CD14-positive monocyte (primary cell): ENCODE measurements at regions of chr22 and their contacts with region 1.

Region 1: GRCh38 chr22:37643225-37643847 is 3.9 kb downstream of the SH3BP1 start:
- DNase-seq: peak; percentile 59 to 79 (median 73)
- H3K4me3 ChIP-seq: no peak overlapping the region
- H3K4me3 Mint-ChIP-seq: peak overlapping the region in 1 of 2 donors; percentile 53
- H3K27ac ChIP-seq: peak overlapping the region in 1 of 2 donors; percentile 43
- H3K27ac Mint-ChIP-seq: peak overlapping the region in 6 of 7 donors; percentile 31 to 84 (median 78)
- H3K4me1 ChIP-seq: peaks cover 40 to 47% of the 10 kb centered on the region in 2 donors
- H3K4me1 Mint-ChIP-seq: peaks cover 39% of the 10 kb centered on the region
- H3K27me3 ChIP-seq: no peaks in the 10 kb centered on the region
- H3K27me3 Mint-ChIP-seq: peaks cover 0 to 5% (median 0%) of the 10 kb centered on the region in 3 donors
- CTCF ChIP-seq: peak; percentile 95

Region 2: DNA sequence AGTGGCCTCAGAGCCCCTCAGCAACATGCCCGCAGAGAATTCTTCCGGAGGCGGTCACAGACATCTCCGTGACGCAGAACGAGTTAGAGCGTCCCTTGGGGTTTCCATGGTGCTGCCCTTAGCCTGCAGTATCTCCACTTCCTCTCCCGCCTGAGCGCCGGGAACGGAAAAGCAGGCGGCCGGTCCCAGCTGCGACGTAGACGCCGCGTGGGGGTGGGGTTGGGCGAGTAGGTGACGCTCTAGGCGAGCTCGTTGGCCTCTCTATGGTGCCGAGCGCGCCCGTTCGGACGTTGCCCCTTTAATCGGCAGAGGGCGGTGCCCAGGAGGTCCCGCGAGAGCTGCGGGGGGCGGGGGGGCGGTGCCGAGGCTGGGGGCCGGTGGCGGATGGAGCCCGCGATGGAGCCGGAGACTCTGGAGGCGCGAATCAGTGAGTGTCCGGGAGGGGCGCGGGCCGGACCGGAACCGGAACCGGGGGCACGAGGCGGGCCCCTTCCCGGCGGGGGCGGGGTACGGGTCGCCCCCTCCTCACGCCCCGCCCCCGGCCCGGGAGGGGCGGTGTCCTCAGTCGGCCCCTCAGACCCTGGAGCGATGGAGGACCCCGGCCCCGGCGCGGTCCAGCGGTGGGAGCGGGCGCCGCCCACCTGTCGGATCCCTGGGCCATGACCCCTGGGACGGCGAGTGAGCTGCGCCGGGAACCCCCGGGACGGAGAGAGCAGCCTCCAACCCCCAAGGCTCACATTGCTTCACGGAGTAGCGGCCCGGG is 34.7 kb before region 1 on chr22 and contains the start of gene GGA1:
- intact Hi-C with region 1: loop called in 1 of 2 experiments (anchors 5 kb)
- DNase-seq: peak; percentile 100
- H3K4me3 ChIP-seq: peak within 1 kb of the TSS; percentile 60 to 81 (median 68)
- H3K4me3 Mint-ChIP-seq: peak within 1 kb of the TSS; percentile 97
- H3K27ac ChIP-seq: peak within 1 kb of the TSS; percentile 91 to 93
- H3K27ac Mint-ChIP-seq: peak within 1 kb of the TSS; percentile 97 to 99 (median 98)
- H3K4me1 ChIP-seq: peaks cover 42 to 45% of the 10 kb centered on the region in 2 donors
- H3K4me1 Mint-ChIP-seq: peaks cover 53% of the 10 kb centered on the region
- H3K27me3 ChIP-seq: no peaks in the 10 kb centered on the region
- H3K27me3 Mint-ChIP-seq: peaks cover 7 to 16% (median 7%) of the 10 kb centered on the region in 3 donors
- CTCF ChIP-seq: no peak
- polyA plus RNA-seq, gene GGA1: 19.8 to 91.0 (median 24.8) TPM

Region 3: DNA sequence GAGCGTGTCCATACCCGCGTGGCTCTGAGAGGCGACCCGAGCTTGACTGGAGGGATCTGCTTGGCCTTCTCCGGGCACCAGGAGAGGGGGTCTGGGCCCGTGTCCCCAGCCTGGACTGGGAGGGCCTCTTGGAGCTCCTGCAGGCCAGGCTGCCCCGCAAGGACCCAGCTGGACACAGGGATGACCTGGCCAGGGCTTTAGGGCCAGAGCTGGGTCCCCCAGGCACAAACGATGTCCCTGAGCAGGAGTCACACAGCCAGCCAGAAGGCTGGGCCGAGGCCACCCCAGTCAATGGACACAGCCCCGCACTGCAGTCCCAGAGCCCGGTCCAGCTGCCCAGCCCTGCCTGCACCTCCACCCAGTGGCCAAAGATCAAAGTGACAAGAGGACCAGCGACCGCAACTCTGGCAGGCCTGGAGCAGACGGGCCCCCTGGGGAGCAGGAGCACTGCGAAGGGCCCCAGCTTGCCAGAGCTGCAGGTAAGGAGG is 91.7 kb after region 1 on chr22:
- intact Hi-C with region 1: loop called in 1 of 2 experiments (anchors 10 kb)
- DNase-seq: peak in 1 of 3 donors; percentile 34
- H3K4me3 ChIP-seq: no peak overlapping the region
- H3K4me3 Mint-ChIP-seq: no peak overlapping the region
- H3K27ac ChIP-seq: no peak overlapping the region
- H3K27ac Mint-ChIP-seq: no peak overlapping the region
- H3K4me1 ChIP-seq: peaks cover 69 to 85% of the 10 kb centered on the region in 2 donors
- H3K4me1 Mint-ChIP-seq: peaks cover 71% of the 10 kb centered on the region
- H3K27me3 ChIP-seq: no peaks in the 10 kb centered on the region
- H3K27me3 Mint-ChIP-seq: peaks cover 0 to 4% (median 2%) of the 10 kb centered on the region in 3 donors
- CTCF ChIP-seq: peak; percentile 40